B cell (primary cell): ENCODE measurements at regions of chrX and their contacts with region 1.

Region 1: GRCh38 chrX:66110112-66110511 is 53.9 kb upstream of the HEPH start:
- DNase-seq: peak; percentile 42
- ATAC-seq: peak; percentile 51
- H3K4me3 ChIP-seq: no peak overlapping the region
- H3K4me3 Mint-ChIP-seq: no peak overlapping the region
- H3K27ac ChIP-seq: no peak overlapping the region
- H3K27ac Mint-ChIP-seq: no peak overlapping the region
- H3K4me1 ChIP-seq: peaks cover 0 to 8% of the 10 kb centered on the region in 2 donors
- H3K4me1 Mint-ChIP-seq: peaks cover 9% of the 10 kb centered on the region
- H3K27me3 ChIP-seq: peaks cover 0 to 2% (median 0%) of the 10 kb centered on the region in 4 experiments
- H3K27me3 Mint-ChIP-seq: no peaks in the 10 kb centered on the region
- CTCF ChIP-seq: peak; percentile 71

Region 2: DNA sequence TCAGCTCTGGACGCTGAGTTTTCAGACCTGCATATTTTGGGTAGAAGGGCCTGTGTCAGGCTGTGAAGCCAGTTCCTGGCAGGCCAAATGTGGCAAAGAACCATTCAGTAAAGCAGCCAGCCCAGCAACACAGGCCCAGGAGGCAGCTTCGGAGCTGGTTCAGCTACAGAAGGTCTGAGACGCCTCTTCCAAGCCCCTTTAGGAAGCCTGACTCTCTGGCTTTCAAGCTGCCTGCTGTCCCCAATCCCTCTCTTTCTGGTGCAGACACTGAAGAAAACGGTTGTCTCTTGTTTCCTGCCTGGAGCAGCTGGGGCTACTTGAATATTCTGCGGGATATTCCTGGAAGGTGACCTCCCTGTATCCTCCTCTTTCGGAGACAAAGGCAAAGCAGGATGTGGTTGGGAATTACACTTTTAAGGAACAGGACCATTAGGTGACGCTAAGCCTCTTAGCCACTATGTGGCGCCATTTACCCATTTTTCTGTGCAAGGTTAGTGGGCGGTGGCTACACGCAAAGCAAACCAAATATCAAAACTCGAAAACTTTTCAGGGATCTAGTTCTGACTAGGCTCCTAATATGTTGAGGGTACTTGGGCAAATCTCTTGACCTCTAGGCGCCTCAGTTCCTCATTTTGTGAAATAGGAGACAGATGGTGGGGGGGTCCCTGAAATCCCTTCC is 528.3 kb before region 1 on chrX:
- CTCF ChIA-PET with region 1: interaction called, 5 read pairs
- POLR2A ChIA-PET with region 1: no interaction called
- intact Hi-C with region 1: loop called (anchors 1 kb)
- DNase-seq: peak; percentile 71
- ATAC-seq: peak; percentile 62
- H3K4me3 ChIP-seq: no peak overlapping the region
- H3K4me3 Mint-ChIP-seq: no peak overlapping the region
- H3K27ac ChIP-seq: no peak overlapping the region
- H3K27ac Mint-ChIP-seq: no peak overlapping the region
- H3K4me1 ChIP-seq: peaks cover 5 to 6% of the 10 kb centered on the region in 2 donors
- H3K4me1 Mint-ChIP-seq: peaks cover 4% of the 10 kb centered on the region
- H3K27me3 ChIP-seq: no peaks in the 10 kb centered on the region
- H3K27me3 Mint-ChIP-seq: no peaks in the 10 kb centered on the region
- CTCF ChIP-seq: peak; percentile 73

Region 3: DNA sequence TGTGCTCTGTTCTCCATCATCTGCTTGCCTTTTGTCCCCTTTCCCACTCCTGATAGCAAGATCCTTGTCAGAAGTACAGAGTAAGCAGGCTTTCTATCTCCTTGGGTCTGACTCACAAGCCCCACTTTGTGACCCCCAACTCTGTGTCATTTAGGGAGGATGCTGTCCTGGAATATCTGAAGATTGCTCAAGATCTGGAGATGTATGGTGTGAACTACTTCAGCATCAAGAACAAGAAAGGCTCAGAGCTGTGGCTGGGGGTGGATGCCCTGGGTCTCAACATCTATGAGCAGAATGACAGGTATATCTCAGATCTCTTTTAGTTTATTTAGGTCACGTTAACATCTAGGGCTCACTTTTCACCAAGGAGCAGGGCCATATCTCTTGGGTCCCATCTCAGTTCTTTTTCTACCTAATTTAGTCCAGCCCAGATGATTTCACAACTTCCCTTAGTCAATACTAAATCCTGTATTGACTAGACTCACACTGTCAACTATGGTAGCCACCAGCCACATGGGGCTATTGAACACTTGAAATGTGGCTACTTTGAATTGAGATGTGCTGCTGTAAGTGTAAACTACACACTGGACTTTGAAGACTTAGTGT is 378.3 kb before region 1 on chrX:
- CTCF ChIA-PET with region 1: interaction called, 3 read pairs
- POLR2A ChIA-PET with region 1: no interaction called
- intact Hi-C with region 1: loop called (anchors 10 kb)
- DNase-seq: no peak
- ATAC-seq: no peak
- H3K4me3 ChIP-seq: no peak overlapping the region
- H3K4me3 Mint-ChIP-seq: no peak overlapping the region
- H3K27ac ChIP-seq: peak overlapping the region in 1 of 2 donors; percentile 38
- H3K27ac Mint-ChIP-seq: peak overlapping the region; percentile 32
- H3K4me1 ChIP-seq: peaks cover 4 to 7% of the 10 kb centered on the region in 2 donors
- H3K4me1 Mint-ChIP-seq: peaks cover 23% of the 10 kb centered on the region
- H3K27me3 ChIP-seq: no peaks in the 10 kb centered on the region
- H3K27me3 Mint-ChIP-seq: no peaks in the 10 kb centered on the region
- CTCF ChIP-seq: no peak

Region 4: DNA sequence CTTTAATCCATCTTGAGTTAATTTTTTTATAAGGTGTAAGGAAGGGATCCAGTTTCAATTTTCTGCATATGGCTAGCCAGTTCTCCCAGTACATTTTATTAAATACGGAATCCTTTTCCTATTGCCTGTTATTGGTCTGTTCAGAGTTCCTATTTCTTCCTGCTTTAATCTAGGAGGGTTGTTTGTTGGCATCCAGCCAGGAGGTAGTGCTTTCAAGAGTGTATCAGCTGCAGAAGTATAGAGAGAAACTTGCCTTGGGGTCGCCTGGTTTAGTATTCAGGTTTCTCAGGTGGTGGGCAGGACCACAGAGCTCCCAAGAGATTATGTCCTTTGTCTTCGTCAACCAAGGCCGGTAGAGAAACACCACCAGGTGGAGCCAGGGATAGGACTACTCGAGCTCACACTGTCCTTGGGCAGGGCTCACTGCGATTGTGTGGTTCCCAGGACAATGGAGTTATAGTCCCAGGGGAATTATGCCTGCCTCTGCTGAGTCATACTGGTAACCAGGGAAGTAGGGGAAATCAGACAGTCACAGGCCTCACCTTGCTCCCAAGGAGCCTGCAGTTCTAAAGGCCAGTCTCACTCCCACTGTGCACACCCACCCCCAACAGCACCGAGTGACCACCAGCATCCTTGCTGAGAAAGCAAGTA is 238.3 kb before region 1 on chrX:
- CTCF ChIA-PET with region 1: interaction called, 10 read pairs
- POLR2A ChIA-PET with region 1: no interaction called
- intact Hi-C with region 1: no loop called
- DNase-seq: peak; percentile 29
- ATAC-seq: peak; percentile 31
- H3K4me3 ChIP-seq: no peak overlapping the region
- H3K4me3 Mint-ChIP-seq: no peak overlapping the region
- H3K27ac ChIP-seq: no peak overlapping the region
- H3K27ac Mint-ChIP-seq: no peak overlapping the region
- H3K4me1 ChIP-seq: peaks cover 0 to 11% of the 10 kb centered on the region in 2 donors
- H3K4me1 Mint-ChIP-seq: peaks cover 17% of the 10 kb centered on the region
- H3K27me3 ChIP-seq: no peaks in the 10 kb centered on the region
- H3K27me3 Mint-ChIP-seq: no peaks in the 10 kb centered on the region
- CTCF ChIP-seq: no peak

Region 5: DNA sequence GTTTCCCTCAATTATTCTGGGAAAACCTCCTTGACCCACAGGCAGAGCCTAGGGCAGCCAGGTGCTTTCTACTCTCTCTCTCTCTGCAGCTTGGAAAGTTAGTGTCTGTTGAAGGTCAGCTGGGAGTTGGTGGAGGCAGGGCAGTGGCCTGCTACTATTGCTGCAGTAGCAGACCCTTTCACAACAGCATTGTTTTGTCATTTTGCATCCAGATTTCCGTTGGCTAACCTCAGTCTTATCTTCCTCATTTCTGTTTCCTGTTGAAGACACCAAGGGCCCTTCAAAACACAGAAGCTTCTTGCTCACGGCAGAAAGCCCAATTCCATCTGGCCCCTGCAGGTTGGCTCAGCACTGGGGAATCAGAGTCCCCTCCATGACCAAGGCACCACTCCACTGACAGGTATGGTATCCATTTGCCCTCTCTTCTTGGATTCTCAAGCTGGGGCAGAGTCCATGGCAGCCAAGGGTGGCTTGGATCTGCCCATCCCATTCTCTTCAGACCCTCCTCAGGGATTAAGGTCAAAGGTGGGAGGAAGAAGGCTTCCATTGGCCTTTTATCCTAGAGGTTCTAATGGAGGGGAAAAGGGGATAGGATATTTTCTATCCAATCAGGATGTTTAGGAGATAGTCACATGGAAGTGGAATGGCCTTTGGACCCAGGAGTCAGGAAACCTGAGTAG is 94.8 kb before region 1 on chrX:
- CTCF ChIA-PET with region 1: interaction called, 33 read pairs
- POLR2A ChIA-PET with region 1: interaction called, 3 read pairs
- intact Hi-C with region 1: loop called (anchors 2 kb)
- DNase-seq: peak; percentile 74
- ATAC-seq: peak; percentile 69
- H3K4me3 ChIP-seq: peak overlapping the region; percentile 64 to 89 (median 75)
- H3K4me3 Mint-ChIP-seq: peak overlapping the region; percentile 75
- H3K27ac ChIP-seq: peak overlapping the region; percentile 72 to 80
- H3K27ac Mint-ChIP-seq: peak overlapping the region; percentile 90
- H3K4me1 ChIP-seq: peaks cover 83 to 99% of the 10 kb centered on the region in 2 donors
- H3K4me1 Mint-ChIP-seq: peaks cover 80% of the 10 kb centered on the region
- H3K27me3 ChIP-seq: no peaks in the 10 kb centered on the region
- H3K27me3 Mint-ChIP-seq: no peaks in the 10 kb centered on the region
- CTCF ChIP-seq: no peak

Region 6: DNA sequence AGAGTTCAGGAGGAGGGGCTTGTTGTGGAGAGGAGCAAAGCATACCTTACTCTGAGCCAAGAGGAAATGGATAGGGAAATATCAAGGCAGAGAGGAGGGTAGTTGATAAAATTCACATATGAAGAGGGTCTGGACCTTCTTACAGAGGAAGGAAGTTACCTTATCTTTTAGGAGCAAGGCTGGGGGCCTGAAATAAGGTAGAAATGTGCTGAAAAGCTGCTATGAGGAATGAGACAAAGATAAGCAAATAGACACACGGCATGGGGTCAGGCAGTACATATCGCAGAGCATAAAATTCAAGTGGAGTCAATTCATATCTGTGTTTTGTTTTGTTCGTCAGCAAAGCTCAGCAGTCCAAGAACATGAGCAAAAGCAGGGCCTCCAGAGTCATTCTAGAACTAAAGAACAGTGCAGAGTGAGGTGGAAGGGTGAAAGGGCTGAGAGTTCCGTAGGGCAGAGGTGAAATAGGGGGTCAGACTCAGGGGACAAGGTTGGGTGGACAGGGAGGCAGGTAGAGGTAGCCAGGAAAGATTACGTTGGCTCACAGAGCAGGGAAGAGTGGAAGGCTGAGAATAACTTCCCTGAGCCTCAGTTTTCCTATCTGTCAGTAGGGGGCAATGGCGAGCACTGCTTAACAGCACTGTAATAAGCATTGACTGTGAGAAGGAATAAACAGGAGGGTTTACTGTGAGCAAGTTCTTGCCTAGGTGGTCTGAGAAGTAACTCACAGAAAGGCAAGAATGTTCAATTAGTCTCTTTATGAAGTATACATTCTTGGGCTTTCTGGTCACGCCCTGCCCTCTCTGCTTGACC is 79.4 kb before region 1 on chrX:
- CTCF ChIA-PET with region 1: interaction called, 10 read pairs
- POLR2A ChIA-PET with region 1: no interaction called
- intact Hi-C with region 1: no loop called
- DNase-seq: peak; percentile 39
- ATAC-seq: peak; percentile 66
- H3K4me3 ChIP-seq: no peak overlapping the region
- H3K4me3 Mint-ChIP-seq: no peak overlapping the region
- H3K27ac ChIP-seq: no peak overlapping the region
- H3K27ac Mint-ChIP-seq: no peak overlapping the region
- H3K4me1 ChIP-seq: peaks cover 13 to 18% of the 10 kb centered on the region in 2 donors
- H3K4me1 Mint-ChIP-seq: peaks cover 7% of the 10 kb centered on the region
- H3K27me3 ChIP-seq: no peaks in the 10 kb centered on the region
- H3K27me3 Mint-ChIP-seq: no peaks in the 10 kb centered on the region
- CTCF ChIP-seq: peak; percentile 62